ENCODE measurements at regions of chr15 and their contacts with region 1.

Region 1: DNA sequence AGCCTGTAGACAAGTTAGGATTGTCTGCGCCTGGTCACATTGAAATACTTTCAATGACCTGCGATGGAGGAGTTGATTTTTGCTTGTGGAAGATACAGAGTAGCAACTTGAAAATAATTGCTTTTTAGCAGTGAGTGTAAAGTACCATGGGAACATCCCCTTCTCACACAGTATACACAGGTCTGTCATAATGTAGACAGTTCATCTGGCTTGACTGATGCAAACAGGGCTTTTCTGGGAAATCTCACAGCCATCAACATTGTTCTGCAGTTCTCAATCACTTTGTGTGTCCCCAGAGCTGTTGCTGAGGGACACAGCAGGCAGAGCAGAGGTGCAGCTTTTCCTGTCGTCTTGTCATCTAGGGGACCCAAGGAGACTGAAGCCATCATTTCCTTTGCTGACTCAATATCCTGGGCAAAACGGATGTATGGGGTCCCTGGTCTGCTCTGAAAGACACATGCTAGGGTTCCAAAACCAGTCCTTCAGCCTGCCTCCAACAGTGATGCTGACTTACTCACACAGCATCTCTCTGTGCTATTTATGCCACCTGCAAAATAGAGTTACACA is 5.3 kb upstream of the REC114 start:
- DNase-seq: no peak
- H3K4me3 Mint-ChIP-seq: no peak overlapping the region
- H3K27ac Mint-ChIP-seq: no peak overlapping the region
- H3K4me1 Mint-ChIP-seq: no peaks in the 10 kb centered on the region
- H3K27me3 Mint-ChIP-seq: peaks cover 75% of the 10 kb centered on the region
- CTCF ChIP-seq: no peak

Region 2: DNA sequence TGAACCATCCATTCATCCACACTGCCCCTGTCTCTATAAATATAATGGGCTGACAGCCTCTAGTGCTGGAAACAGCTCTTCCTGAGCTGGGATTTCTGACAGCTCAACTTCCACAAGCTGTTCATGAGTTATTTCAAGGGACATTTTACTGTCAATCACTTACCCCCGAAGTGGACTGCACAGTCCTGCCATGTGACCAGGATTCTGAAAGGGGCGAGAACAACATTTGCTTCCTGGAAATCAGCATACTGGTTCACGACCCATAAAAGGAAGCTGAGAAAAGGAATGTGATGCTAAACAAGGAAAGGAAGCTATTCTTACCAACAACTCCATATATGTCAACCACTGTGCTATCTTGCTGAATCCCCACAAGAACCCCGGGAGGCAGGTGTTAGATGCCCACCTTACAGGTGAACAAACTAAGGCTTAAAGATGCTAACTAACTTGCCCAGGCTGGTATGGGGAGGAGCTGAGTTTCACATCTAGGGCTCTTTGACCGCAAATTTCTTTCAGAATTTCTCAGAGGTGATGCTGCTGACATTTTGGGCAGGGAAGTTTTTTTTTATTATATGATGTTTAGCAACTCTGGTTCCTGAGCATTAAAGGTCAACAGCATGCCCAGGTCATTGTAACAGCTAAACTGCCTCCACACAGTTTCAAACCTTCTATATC is 11.2 kb before region 1 on chr15:
- CTCF ChIA-PET with region 1: no interaction called
- POLR2A ChIA-PET with region 1: no interaction called
- intact Hi-C with region 1: no loop called
- DNase-seq: no peak
- H3K4me3 Mint-ChIP-seq: no peak overlapping the region
- H3K27ac Mint-ChIP-seq: no peak overlapping the region
- H3K4me1 Mint-ChIP-seq: no peaks in the 10 kb centered on the region
- H3K27me3 Mint-ChIP-seq: peaks cover 83% of the 10 kb centered on the region
- CTCF ChIP-seq: no peak

Region 3: DNA sequence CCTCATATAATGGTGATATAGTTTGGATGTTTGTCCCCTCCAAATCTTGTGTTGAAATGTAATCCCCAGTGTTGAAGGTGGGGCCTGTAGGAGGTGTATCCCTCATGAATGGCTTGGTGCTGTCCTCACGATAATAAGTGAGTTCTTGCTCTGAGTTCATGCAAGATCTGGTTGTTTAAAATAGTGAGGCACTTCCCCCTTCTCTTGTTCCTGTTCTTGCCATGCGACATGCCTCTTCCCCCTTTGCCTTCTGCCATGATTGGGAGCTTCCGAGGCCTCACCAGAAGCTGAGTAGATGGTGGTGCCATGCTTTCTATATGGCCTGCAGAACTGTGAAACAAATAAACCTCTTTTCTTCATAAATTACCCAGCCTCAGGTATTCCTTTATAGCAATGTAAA is 44.5 kb after region 1 on chr15:
- CTCF ChIA-PET with region 1: no interaction called
- POLR2A ChIA-PET with region 1: no interaction called
- intact Hi-C with region 1: loop called (anchors 1 kb)
- DNase-seq: no peak
- H3K4me3 Mint-ChIP-seq: no peak overlapping the region
- H3K27ac Mint-ChIP-seq: no peak overlapping the region
- H3K4me1 Mint-ChIP-seq: no peaks in the 10 kb centered on the region
- H3K27me3 Mint-ChIP-seq: peaks cover 17% of the 10 kb centered on the region
- CTCF ChIP-seq: no peak

Region 4: DNA sequence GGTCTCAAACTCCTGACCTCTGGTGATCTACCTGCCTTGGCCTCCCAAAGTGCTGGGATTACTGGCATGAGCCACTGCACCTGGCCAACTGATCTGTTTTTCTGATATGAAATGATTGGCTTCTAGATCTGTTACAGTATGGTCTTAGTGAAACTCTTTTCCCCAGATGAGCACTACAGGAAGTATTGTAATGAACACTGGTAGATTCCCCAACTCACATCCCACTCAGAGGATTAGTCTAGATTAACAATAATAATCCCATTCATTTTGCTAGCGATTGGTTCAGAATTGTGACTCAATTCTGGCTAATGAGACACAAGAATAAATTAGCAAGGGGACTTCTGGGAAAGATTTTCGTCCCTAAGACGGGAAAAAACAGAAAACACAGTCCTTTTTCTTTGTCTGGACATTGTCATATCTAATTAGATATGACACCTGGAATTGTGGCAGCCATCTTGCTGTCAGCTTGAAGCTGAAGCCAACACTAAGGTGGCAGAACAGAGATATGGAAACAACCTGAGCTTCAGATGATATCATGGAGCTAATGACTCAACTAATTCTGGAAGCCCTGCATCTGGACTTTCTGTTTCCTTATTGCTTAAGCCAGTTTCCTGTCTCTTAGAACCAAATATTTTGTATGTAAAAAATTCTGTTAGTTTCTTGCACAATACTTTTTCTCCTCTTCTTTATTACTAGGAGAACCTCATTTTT is 212.9 kb after region 1 on chr15:
- CTCF ChIA-PET with region 1: no interaction called
- POLR2A ChIA-PET with region 1: no interaction called
- intact Hi-C with region 1: no loop called
- DNase-seq: peak; percentile 66
- H3K4me3 Mint-ChIP-seq: no peak overlapping the region
- H3K27ac Mint-ChIP-seq: peak overlapping the region; percentile 44
- H3K4me1 Mint-ChIP-seq: peaks cover 32% of the 10 kb centered on the region
- H3K27me3 Mint-ChIP-seq: no peaks in the 10 kb centered on the region
- CTCF ChIP-seq: no peak

Measured in MCF 10A (cell line).